ENCODE measurements at regions of chr4 and their contacts with region 1.

Region 1: GRCh38 chr4:89657931-89658700 is 178.8 kb downstream of the SNCA start:
- DNase-seq: peak; percentile 10
- H3K4me3 ChIP-seq: no peak overlapping the region; a peak in 1 of 4 replicates
- H3K27ac ChIP-seq: no peak overlapping the region
- H3K4me1 ChIP-seq: no peaks in the 10 kb centered on the region
- H3K27me3 ChIP-seq: no peaks in the 10 kb centered on the region
- CTCF ChIP-seq: peak; percentile 66
- EP300 ChIP-seq: no peak
- RAD21 ChIP-seq: peak; percentile 85

Region 2: GRCh38 chr4:89254847-89255246 is 403.3 kb before region 1 on chr4:
- CTCF ChIA-PET with region 1: no interaction called
- POLR2A ChIA-PET with region 1: no interaction called
- DNase-seq: peak; percentile 36
- H3K4me3 ChIP-seq: no peak overlapping the region; a peak in 1 of 4 replicates
- H3K27ac ChIP-seq: no peak overlapping the region
- H3K4me1 ChIP-seq: no peaks in the 10 kb centered on the region; a peak in 1 of 4 replicates
- H3K27me3 ChIP-seq: no peaks in the 10 kb centered on the region
- CTCF ChIP-seq: peak; percentile 83
- EP300 ChIP-seq: no peak
- RAD21 ChIP-seq: peak; percentile 49

Region 3: GRCh38 chr4:89486042-89486441 is 172.1 kb before region 1 on chr4:
- CTCF ChIA-PET with region 1: interaction called, 10 read pairs
- POLR2A ChIA-PET with region 1: no interaction called
- DNase-seq: peak; percentile 22
- H3K4me3 ChIP-seq: no peak overlapping the region
- H3K27ac ChIP-seq: no peak overlapping the region
- H3K4me1 ChIP-seq: no peaks in the 10 kb centered on the region; a peak in 1 of 4 replicates
- H3K27me3 ChIP-seq: no peaks in the 10 kb centered on the region
- CTCF ChIP-seq: peak; percentile 37
- EP300 ChIP-seq: no peak
- RAD21 ChIP-seq: peak; percentile 67

Region 4: GRCh38 chr4:89640620-89641366 is 17.3 kb before region 1 on chr4:
- CTCF ChIA-PET with region 1: interaction called, 17 read pairs
- POLR2A ChIA-PET with region 1: no interaction called
- DNase-seq: peak; percentile 65
- H3K4me3 ChIP-seq: peak overlapping the region; percentile 17 to 38; a peak in 2 of 4 replicates
- H3K27ac ChIP-seq: no peak overlapping the region
- H3K4me1 ChIP-seq: peaks cover 0 to 4% of the 10 kb centered on the region in 2 experiments; a peak in 2 of 4 replicates
- H3K27me3 ChIP-seq: no peaks in the 10 kb centered on the region
- CTCF ChIP-seq: peak; percentile 70
- EP300 ChIP-seq: no peak
- RAD21 ChIP-seq: peak; percentile 61

Region 5: DNA sequence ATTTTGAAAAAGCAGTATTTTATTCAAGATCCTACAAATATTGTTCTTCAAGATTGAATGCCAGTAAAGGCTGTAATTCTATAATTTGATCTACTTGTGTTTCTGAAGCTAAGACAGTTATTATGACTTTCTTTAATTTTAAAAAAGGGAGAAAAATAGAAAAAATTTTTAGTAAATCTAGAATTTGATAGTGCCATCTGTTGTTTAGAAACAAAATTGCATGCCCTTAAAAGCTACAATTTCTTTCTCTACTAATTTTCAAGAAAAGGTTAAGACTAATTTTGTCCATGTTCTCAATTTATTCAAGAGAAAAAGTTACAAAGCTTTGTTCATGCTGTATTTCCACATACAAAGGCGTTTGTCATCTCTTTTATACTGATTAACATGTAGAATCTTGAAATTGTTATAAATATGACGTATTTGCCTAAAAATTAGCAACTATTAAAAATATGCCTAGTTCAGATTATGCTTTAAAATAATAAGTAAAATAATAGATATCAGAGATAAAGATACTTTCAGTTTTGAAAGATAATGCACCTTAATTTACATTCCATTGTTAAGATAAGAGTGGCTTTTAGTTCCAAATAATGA is 211.0 kb after region 1 on chr4:
- CTCF ChIA-PET with region 1: interaction called, 48 read pairs
- POLR2A ChIA-PET with region 1: no interaction called
- DNase-seq: no peak
- H3K4me3 ChIP-seq: no peak overlapping the region
- H3K27ac ChIP-seq: no peak overlapping the region
- H3K4me1 ChIP-seq: no peaks in the 10 kb centered on the region
- H3K27me3 ChIP-seq: no peaks in the 10 kb centered on the region
- CTCF ChIP-seq: peak; percentile 79
- EP300 ChIP-seq: no peak
- RAD21 ChIP-seq: peak; percentile 50

Measured in SK-N-SH (cell line).